ENCODE measurements at regions of chr18 and their contacts with region 1.

Region 1: GRCh38 chr18:49794743-49795142 is 18.6 kb downstream of the ACAA2 start:
- DNase-seq: no peak
- ATAC-seq: no peak
- H3K4me3 ChIP-seq: no peak overlapping the region
- H3K27ac ChIP-seq: no peak overlapping the region
- H3K4me1 ChIP-seq: no peaks in the 10 kb centered on the region
- H3K27me3 ChIP-seq: no peaks in the 10 kb centered on the region
- CTCF ChIP-seq: no peak

Region 2: GRCh38 chr18:49582579-49582978 is 212.2 kb before region 1 on chr18:
- CTCF ChIA-PET with region 1: no interaction called
- POLR2A ChIA-PET with region 1: interaction called, 10 read pairs
- in situ Hi-C with region 1: no loop called
- intact Hi-C with region 1: no loop called
- DNase-seq: no peak
- ATAC-seq: peak; percentile 27; the same call in 1 of the 2 replicates
- H3K4me3 ChIP-seq: no peak overlapping the region
- H3K27ac ChIP-seq: no peak overlapping the region
- H3K4me1 ChIP-seq: no peaks in the 10 kb centered on the region
- H3K27me3 ChIP-seq: no peaks in the 10 kb centered on the region
- CTCF ChIP-seq: no peak

Region 3: GRCh38 chr18:49849331-49850217 is 54.8 kb after region 1 on chr18:
- CTCF ChIA-PET with region 1: no interaction called
- POLR2A ChIA-PET with region 1: no interaction called
- in situ Hi-C with region 1: no loop called
- intact Hi-C with region 1: no loop called
- DNase-seq: peak; percentile 36
- ATAC-seq: peak; percentile 73
- H3K4me3 ChIP-seq: peak overlapping the region in 1 of 2 experiments; percentile 14; a peak in 1 of 4 replicates
- H3K27ac ChIP-seq: no peak overlapping the region
- H3K4me1 ChIP-seq: no peaks in the 10 kb centered on the region
- H3K27me3 ChIP-seq: no peaks in the 10 kb centered on the region
- CTCF ChIP-seq: no peak